CD4-positive, alpha-beta T cell (primary cell): ENCODE measurements at regions of chr7 and their contacts with region 1.

Region 1: DNA sequence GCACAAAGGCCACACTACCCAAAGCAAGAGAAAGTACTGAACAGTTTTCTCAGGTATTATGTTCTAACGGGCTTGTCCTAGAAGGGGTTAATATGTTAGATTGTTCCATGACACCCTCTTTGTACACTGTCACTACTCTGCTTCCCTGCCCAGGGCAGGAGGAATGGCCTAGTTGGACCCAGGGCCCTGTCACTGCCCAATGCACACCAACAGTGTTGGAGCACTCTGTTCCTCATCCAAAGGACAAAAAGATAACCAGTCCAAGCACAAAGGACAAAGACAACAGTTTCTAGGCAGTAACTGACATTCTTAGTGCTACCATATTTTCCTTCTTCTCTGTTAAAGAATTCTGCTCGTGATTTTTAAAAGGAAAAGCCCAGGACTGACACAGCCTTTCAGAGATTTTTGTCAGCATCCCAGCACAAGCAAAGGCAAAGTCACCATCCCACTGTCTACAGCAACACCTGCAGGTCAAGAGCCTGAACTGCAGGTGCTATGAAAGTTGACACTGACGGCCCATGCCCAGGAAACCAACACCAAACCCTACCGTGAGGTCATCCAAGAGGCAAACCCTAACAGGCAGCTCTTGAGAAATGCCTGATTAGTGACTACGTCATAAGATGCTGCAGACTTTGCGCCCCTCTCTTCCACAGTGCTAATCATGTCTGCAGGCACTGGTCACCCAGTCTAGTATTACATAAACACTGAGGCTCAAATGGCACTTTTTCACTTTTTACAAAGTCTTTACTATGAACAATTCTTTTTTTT is 13.2 kb downstream of the NUDCD3 start:
- DNase-seq: peak; percentile 33 to 83 (median 50)
- ATAC-seq: peak; percentile 98
- H3K4me3 ChIP-seq: no peak overlapping the region
- H3K4me3 Mint-ChIP-seq: no peak overlapping the region
- H3K27ac ChIP-seq: no peak overlapping the region
- H3K27ac Mint-ChIP-seq: peak overlapping the region; percentile 35
- H3K4me1 ChIP-seq: peaks cover 8% of the 10 kb centered on the region
- H3K4me1 Mint-ChIP-seq: peaks cover 74% of the 10 kb centered on the region
- H3K27me3 ChIP-seq: no peaks in the 10 kb centered on the region
- H3K27me3 Mint-ChIP-seq: no peaks in the 10 kb centered on the region
- CTCF ChIP-seq: peak; percentile 92

Region 2: GRCh38 chr7:44240983-44241510 is 236.2 kb before region 1 on chr7:
- CTCF ChIA-PET with region 1: interaction called, 4 read pairs
- POLR2A ChIA-PET with region 1: no interaction called
- intact Hi-C with region 1: loop called (anchors 1 kb)
- DNase-seq: peak; percentile 33 to 80 (median 51)
- ATAC-seq: peak; percentile 86
- H3K4me3 ChIP-seq: peak overlapping the region; percentile 29
- H3K4me3 Mint-ChIP-seq: peak overlapping the region; percentile 30
- H3K27ac ChIP-seq: no peak overlapping the region
- H3K27ac Mint-ChIP-seq: no peak overlapping the region
- H3K4me1 ChIP-seq: peaks cover 10% of the 10 kb centered on the region
- H3K4me1 Mint-ChIP-seq: no peaks in the 10 kb centered on the region
- H3K27me3 ChIP-seq: no peaks in the 10 kb centered on the region
- H3K27me3 Mint-ChIP-seq: no peaks in the 10 kb centered on the region
- CTCF ChIP-seq: peak; percentile 67

Region 3: GRCh38 chr7:44348300-44348699 is 128.9 kb before region 1 on chr7:
- CTCF ChIA-PET with region 1: interaction called, 3 read pairs
- POLR2A ChIA-PET with region 1: no interaction called
- intact Hi-C with region 1: loop called in 1 of 2 experiments (anchors 10 kb)
- DNase-seq: peak in 4 of 14 experiments; percentile 4 to 37 (median 16)
- ATAC-seq: no peak
- H3K4me3 ChIP-seq: no peak overlapping the region
- H3K4me3 Mint-ChIP-seq: no peak overlapping the region
- H3K27ac ChIP-seq: no peak overlapping the region
- H3K27ac Mint-ChIP-seq: no peak overlapping the region
- H3K4me1 ChIP-seq: no peaks in the 10 kb centered on the region
- H3K4me1 Mint-ChIP-seq: no peaks in the 10 kb centered on the region
- H3K27me3 ChIP-seq: no peaks in the 10 kb centered on the region
- H3K27me3 Mint-ChIP-seq: peaks cover 26% of the 10 kb centered on the region
- CTCF ChIP-seq: no peak

Region 4: DNA sequence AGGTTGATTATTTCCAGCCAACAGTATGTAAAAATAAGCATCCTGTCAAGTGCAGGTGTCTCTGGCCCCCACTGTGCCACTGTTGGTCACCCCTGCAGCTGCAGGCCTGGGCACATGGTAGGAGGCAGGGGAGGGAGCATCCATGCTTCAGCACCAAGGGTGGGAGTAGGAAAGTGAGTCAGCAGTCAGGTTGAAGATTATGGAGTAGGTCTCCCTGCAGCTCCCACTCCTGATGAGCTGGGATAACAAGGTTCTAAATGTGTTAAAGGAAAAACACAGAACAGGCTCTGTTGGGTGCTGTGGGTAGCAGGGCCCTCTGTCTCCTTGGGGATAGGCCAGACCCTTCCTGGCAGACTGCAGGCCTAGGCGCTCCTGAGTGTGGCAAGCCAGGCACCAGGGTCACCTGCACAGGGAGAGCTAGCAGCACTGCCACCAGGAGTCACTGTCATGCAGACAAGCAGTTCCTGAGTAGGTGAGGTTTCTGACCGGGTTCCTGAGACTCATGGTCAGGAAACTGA is 46.1 kb before region 1 on chr7:
- CTCF ChIA-PET with region 1: interaction called, 3 read pairs
- POLR2A ChIA-PET with region 1: no interaction called
- intact Hi-C with region 1: loop called (anchors 1 to 5 kb)
- DNase-seq: peak in 9 of 14 experiments; percentile 4 to 47 (median 16)
- ATAC-seq: peak; percentile 57
- H3K4me3 ChIP-seq: no peak overlapping the region
- H3K4me3 Mint-ChIP-seq: no peak overlapping the region
- H3K27ac ChIP-seq: no peak overlapping the region
- H3K27ac Mint-ChIP-seq: peak overlapping the region; percentile 25
- H3K4me1 ChIP-seq: peaks cover 15% of the 10 kb centered on the region
- H3K4me1 Mint-ChIP-seq: peaks cover 61% of the 10 kb centered on the region
- H3K27me3 ChIP-seq: no peaks in the 10 kb centered on the region
- H3K27me3 Mint-ChIP-seq: no peaks in the 10 kb centered on the region
- CTCF ChIP-seq: no peak

Region 5: GRCh38 chr7:44460325-44460724 is 16.9 kb before region 1 on chr7:
- CTCF ChIA-PET with region 1: interaction called, 3 read pairs
- POLR2A ChIA-PET with region 1: interaction called, 3 read pairs
- intact Hi-C with region 1: loop called in 1 of 2 experiments (anchors 2 kb)
- DNase-seq: peak in 12 of 14 experiments; percentile 10 to 90 (median 40)
- ATAC-seq: peak; percentile 95
- H3K4me3 ChIP-seq: no peak overlapping the region
- H3K4me3 Mint-ChIP-seq: peak overlapping the region; percentile 57
- H3K27ac ChIP-seq: peak overlapping the region in 1 of 2 donors; percentile 12
- H3K27ac Mint-ChIP-seq: peak overlapping the region; percentile 71
- H3K4me1 ChIP-seq: peaks cover 37% of the 10 kb centered on the region
- H3K4me1 Mint-ChIP-seq: peaks cover 85% of the 10 kb centered on the region
- H3K27me3 ChIP-seq: no peaks in the 10 kb centered on the region
- H3K27me3 Mint-ChIP-seq: no peaks in the 10 kb centered on the region
- CTCF ChIP-seq: no peak